Heart left ventricle (tissue), 16 donors: ENCODE measurements at regions of chr17 and their contacts with region 1.

Region 1: GRCh38 chr17:49567871-49568694 is 7.6 kb upstream of the NXPH3 start:
- DNase-seq: peak; percentile 87 to 94 (median 92)
- ATAC-seq: peak; percentile 68 to 84 (median 76)
- H3K4me3 ChIP-seq: peak overlapping the region in 11 of 12 donors; percentile 8 to 60 (median 47)
- H3K27ac ChIP-seq: peak overlapping the region; percentile 59 to 92 (median 78)
- H3K4me1 ChIP-seq: peaks cover 0 to 42% (median 26%) of the 10 kb centered on the region in 12 donors
- H3K27me3 ChIP-seq: no peaks in the 10 kb centered on the region
- CTCF ChIP-seq: peak; percentile 87 to 98 (median 96)
- POLR2A ChIP-seq: no peak

Region 2: GRCh38 chr17:49515196-49515770 is 52.8 kb before region 1 on chr17:
- intact Hi-C with region 1: loop called in 1 of 10 experiments (anchors 5 kb)
- DNase-seq: peak; percentile 90 to 97 (median 93)
- ATAC-seq: peak; percentile 93 to 98 (median 98)
- H3K4me3 ChIP-seq: no peak overlapping the region
- H3K27ac ChIP-seq: peak overlapping the region; percentile 38 to 90 (median 74)
- H3K4me1 ChIP-seq: peaks cover 0 to 45% (median 26%) of the 10 kb centered on the region in 12 donors
- H3K27me3 ChIP-seq: peaks cover 0 to 5% (median 0%) of the 10 kb centered on the region in 9 donors
- CTCF ChIP-seq: peak in 7 of 12 donors; percentile 22 to 59 (median 42)
- POLR2A ChIP-seq: no peak

Region 3: GRCh38 chr17:49694847-49695683 is 127.0 kb after region 1 on chr17:
- intact Hi-C with region 1: loop called (anchors 1 to 2 kb)
- DNase-seq: peak in 3 of 5 donors; percentile 39 to 58 (median 52)
- ATAC-seq: no peak
- H3K4me3 ChIP-seq: peak overlapping the region in 1 of 12 donors; percentile 16
- H3K27ac ChIP-seq: no peak overlapping the region
- H3K4me1 ChIP-seq: peaks cover 0 to 47% (median 26%) of the 10 kb centered on the region in 12 donors
- H3K27me3 ChIP-seq: no peaks in the 10 kb centered on the region
- CTCF ChIP-seq: peak; percentile 81 to 97 (median 92)
- POLR2A ChIP-seq: no peak

Region 4: GRCh38 chr17:49779739-49780231 is 211.7 kb after region 1 on chr17:
- intact Hi-C with region 1: loop called in 7 of 10 experiments (anchors 5 to 10 kb)
- DNase-seq: peak in 1 of 5 donors; percentile 36
- ATAC-seq: peak; percentile 28 to 67 (median 56)
- H3K4me3 ChIP-seq: no peak overlapping the region
- H3K27ac ChIP-seq: peak overlapping the region in 4 of 12 donors; percentile 8 to 38 (median 32)
- H3K4me1 ChIP-seq: peaks cover 0 to 58% (median 31%) of the 10 kb centered on the region in 12 donors
- H3K27me3 ChIP-seq: no peaks in the 10 kb centered on the region
- CTCF ChIP-seq: peak; percentile 31 to 74 (median 62)
- POLR2A ChIP-seq: no peak

Region 5: GRCh38 chr17:49788478-49789242 is 220.6 kb after region 1 on chr17 and contains the start of gene KAT7:
- intact Hi-C with region 1: loop called in 6 of 10 experiments (anchors 5 to 10 kb)
- DNase-seq: peak; percentile 99 to 100 (median 99)
- ATAC-seq: peak; percentile 95 to 97 (median 97)
- H3K4me3 ChIP-seq: peak within 1 kb of the TSS; percentile 77 to 100 (median 96)
- H3K27ac ChIP-seq: peak within 1 kb of the TSS; percentile 89 to 100 (median 99)
- H3K4me1 ChIP-seq: peaks cover 6 to 60% (median 42%) of the 10 kb centered on the region in 12 donors
- H3K27me3 ChIP-seq: no peaks in the 10 kb centered on the region
- CTCF ChIP-seq: peak in 7 of 12 donors; percentile 9 to 43 (median 25)
- POLR2A ChIP-seq: peak; percentile 38 to 87
- total RNA-seq, gene KAT7: 34.3 to 80.9 (median 56.0) TPM

Region 6: GRCh38 chr17:49851387-49852291 is 283.6 kb after region 1 on chr17:
- intact Hi-C with region 1: loop called in 9 of 10 experiments (anchors 1 to 5 kb)
- DNase-seq: peak; percentile 81 to 89 (median 83)
- ATAC-seq: peak; percentile 65 to 88 (median 80)
- H3K4me3 ChIP-seq: peak overlapping the region; percentile 40 to 82 (median 64)
- H3K27ac ChIP-seq: peak overlapping the region in 9 of 12 donors; percentile 20 to 72 (median 58)
- H3K4me1 ChIP-seq: peaks cover 0 to 24% (median 13%) of the 10 kb centered on the region in 12 donors
- H3K27me3 ChIP-seq: no peaks in the 10 kb centered on the region
- CTCF ChIP-seq: peak; percentile 70 to 86 (median 77)
- POLR2A ChIP-seq: no peak

Region 7: GRCh38 chr17:49861150-49861892 is 293.2 kb after region 1 on chr17:
- intact Hi-C with region 1: loop called in 1 of 10 experiments (anchors 5 kb)
- DNase-seq: peak in 1 of 5 donors; percentile 58
- ATAC-seq: peak in 2 of 4 donors; percentile 47 to 59
- H3K4me3 ChIP-seq: no peak overlapping the region
- H3K27ac ChIP-seq: no peak overlapping the region
- H3K4me1 ChIP-seq: peaks cover 0 to 14% (median 0%) of the 10 kb centered on the region in 12 donors
- H3K27me3 ChIP-seq: peaks cover 0 to 9% (median 0%) of the 10 kb centered on the region in 9 donors
- CTCF ChIP-seq: peak; percentile 75 to 90 (median 86)
- POLR2A ChIP-seq: no peak